Aorta (tissue), 5 donors: ENCODE measurements at regions of chr12 and their contacts with region 1.

Region 1: GRCh38 chr12:29519585-29520182 is 22.2 kb upstream of the OVCH1 start:
- DNase-seq: no peak
- ATAC-seq: no peak
- H3K4me3 ChIP-seq: no peak overlapping the region
- H3K27ac ChIP-seq: no peak overlapping the region
- H3K4me1 ChIP-seq: no peaks in the 10 kb centered on the region
- H3K27me3 ChIP-seq: no peaks in the 10 kb centered on the region

Region 2: DNA sequence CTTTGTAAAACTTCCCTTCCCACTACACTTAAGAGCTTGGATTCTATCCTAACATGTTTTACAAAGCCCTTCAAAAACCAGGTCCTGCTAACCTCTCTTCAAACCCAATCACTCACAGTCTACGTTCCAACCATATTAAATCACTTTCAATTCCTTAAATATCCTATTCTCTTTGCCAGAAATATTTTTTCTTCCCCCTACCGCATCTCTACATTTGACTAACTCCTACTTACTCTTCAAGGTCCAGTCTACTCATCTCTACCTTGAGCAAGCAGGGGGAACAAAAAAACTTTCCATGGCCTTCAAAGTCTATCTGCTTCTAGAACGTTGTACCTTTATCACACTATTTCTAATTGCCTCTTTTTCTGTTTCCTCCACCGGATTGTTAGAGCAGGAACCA is 144.8 kb before region 1 on chr12:
- intact Hi-C with region 1: no loop called
- DNase-seq: no peak
- ATAC-seq: no peak
- H3K4me3 ChIP-seq: no peak overlapping the region
- H3K27ac ChIP-seq: no peak overlapping the region
- H3K4me1 ChIP-seq: no peaks in the 10 kb centered on the region
- H3K27me3 ChIP-seq: no peaks in the 10 kb centered on the region

Region 3: DNA sequence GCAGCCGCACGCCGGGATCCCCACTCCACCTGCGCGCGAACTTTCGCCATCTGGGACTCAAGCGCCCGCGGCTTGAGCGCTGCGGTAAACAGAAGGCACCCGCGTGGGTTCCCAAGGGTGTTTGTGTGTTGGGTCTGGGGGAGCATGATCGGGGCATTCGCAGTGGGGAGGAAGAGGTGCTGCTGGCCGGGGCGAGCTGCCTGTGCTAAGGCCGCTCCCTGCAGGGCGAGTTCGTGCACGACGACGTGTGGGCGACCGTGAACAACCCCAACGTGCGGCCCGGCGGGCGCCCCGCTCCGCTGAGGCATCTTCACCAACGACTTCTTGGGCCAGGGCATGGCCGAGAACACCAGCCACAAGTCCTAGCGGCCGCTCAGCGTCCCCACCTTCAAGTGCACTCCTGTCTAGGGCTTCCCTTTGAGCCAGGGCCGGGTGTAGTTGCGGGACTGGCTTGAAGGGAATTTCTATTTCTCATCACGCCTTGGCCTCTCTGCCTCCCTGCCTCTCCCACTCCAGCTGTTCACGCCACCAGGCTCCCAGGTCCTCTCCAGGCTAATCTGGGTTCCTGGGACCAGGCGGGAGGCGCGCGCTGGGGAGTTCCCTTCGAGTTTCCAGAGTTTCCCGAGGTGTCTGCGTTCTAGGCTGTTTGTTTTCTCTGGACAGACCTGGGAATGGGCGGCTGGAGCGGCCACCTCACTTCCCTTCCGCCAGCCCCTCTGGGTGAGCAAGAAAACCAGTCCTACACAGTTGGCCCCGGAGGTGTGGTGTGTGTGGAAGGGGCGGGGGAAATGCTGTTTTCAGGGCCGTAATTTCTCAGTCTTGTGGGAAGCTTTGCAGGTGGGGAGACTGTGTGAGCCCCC is 681.8 kb after region 1 on chr12:
- intact Hi-C with region 1: loop called in 1 of 2 experiments (anchors 10 kb)
- DNase-seq: peak; percentile 40 to 71
- ATAC-seq: peak; percentile 36
- H3K4me3 ChIP-seq: peak overlapping the region; percentile 4 to 38
- H3K27ac ChIP-seq: no peak overlapping the region
- H3K4me1 ChIP-seq: no peaks in the 10 kb centered on the region
- H3K27me3 ChIP-seq: no peaks in the 10 kb centered on the region

Region 4: GRCh38 chr12:30286345-30286926 is 766.8 kb after region 1 on chr12:
- intact Hi-C with region 1: loop called (anchors 5 kb)
- DNase-seq: no peak
- ATAC-seq: no peak
- H3K4me3 ChIP-seq: no peak overlapping the region
- H3K27ac ChIP-seq: no peak overlapping the region
- H3K4me1 ChIP-seq: no peaks in the 10 kb centered on the region
- H3K27me3 ChIP-seq: no peaks in the 10 kb centered on the region

Region 5: GRCh38 chr12:30806989-30807694 is 1287.5 kb after region 1 on chr12:
- intact Hi-C with region 1: loop called in 1 of 2 experiments (anchors 5 kb)
- DNase-seq: no peak
- ATAC-seq: peak; percentile 86
- H3K4me3 ChIP-seq: no peak overlapping the region
- H3K27ac ChIP-seq: no peak overlapping the region
- H3K4me1 ChIP-seq: peaks cover 0 to 2% of the 10 kb centered on the region in 2 donors
- H3K27me3 ChIP-seq: no peaks in the 10 kb centered on the region